ENCODE measurements at regions of chr20 and their contacts with region 1.

Region 1: DNA sequence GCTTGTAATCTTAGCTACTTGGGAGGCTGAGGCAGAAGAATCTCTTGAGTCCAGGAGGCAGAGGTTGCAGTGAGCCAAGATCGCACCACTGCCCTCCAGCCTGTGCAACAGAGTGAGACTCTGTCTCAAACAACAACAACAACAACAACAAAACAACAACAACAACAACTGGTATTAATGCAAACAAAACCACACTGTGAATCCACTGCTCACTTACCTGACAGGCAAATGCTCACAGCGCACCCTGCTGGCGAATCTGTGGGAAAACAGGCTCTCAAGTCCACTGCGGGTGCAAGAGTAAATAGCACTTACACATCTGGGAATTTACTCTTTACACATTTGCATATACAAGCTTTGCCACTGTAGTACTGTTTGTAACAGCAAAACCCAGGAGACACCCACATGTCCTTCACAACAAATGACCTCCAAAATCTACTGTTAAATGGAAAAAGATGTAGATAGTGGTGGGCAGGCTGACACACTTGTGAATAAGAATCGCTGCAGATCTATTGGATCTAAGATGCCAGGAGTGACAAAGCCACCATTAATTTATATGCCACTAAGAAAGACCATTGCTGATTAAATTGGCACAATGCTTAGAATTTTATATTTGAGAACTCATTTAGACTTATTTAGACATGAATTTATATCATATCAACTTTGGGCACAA is 29.3 kb downstream of the NSFL1C start:
- DNase-seq: peak; percentile 57
- ATAC-seq: peak; percentile 59
- H3K4me3 Mint-ChIP-seq: no peak overlapping the region
- H3K27ac Mint-ChIP-seq: no peak overlapping the region
- H3K4me1 Mint-ChIP-seq: peaks cover 34% of the 10 kb centered on the region
- H3K27me3 Mint-ChIP-seq: no peaks in the 10 kb centered on the region
- CTCF ChIP-seq: peak; percentile 81

Region 2: GRCh38 chr20:1212607-1213396 is 224.6 kb before region 1 on chr20:
- CTCF ChIA-PET with region 1: interaction called, 3 read pairs
- POLR2A ChIA-PET with region 1: no interaction called
- intact Hi-C with region 1: loop called (anchors 2 kb)
- DNase-seq: peak; percentile 22
- ATAC-seq: peak; percentile 91
- H3K4me3 Mint-ChIP-seq: no peak overlapping the region
- H3K27ac Mint-ChIP-seq: no peak overlapping the region
- H3K4me1 Mint-ChIP-seq: peaks cover 7% of the 10 kb centered on the region
- H3K27me3 Mint-ChIP-seq: peaks cover 46% of the 10 kb centered on the region
- CTCF ChIP-seq: peak; percentile 64

Region 3: DNA sequence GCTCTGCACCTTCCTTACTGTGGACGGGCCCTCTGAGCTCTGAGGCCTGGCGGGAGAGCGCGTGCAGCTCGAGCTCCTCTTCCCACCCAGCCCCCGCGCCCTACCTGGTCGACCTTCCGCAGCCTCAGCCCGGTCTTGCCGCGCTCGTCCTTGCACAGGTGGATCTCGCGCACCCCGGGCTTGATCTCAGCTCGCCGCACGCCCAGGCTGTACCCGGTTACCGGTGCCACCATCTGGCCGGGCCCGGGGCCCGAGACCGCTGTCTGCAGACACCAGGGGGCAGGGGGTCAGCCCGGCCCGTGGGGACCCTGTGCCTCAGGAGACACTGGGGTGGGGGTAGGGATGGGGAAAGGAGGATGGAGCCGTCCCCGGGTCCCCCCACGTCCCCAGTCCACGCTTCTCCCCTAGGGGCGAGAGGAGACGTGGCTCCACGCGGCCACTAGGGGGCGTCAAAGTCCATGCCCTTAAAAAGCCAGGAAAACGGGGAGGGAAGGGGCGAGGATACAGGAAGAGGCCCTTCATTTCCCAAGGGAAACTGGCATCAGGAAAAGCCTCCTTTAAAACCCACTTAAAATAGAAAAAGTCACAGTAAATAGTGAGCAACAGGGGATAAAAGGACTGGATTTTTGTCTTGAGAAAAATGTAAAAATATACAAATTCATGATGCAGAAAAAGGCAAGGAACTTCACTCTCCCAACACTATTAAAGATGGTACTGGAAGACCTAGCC is 124.0 kb before region 1 on chr20:
- CTCF ChIA-PET with region 1: interaction called, 59 read pairs
- POLR2A ChIA-PET with region 1: no interaction called
- intact Hi-C with region 1: loop called (anchors 1 kb)
- DNase-seq: peak; percentile 53
- ATAC-seq: peak; percentile 77
- H3K4me3 Mint-ChIP-seq: no peak overlapping the region
- H3K27ac Mint-ChIP-seq: no peak overlapping the region
- H3K4me1 Mint-ChIP-seq: peaks cover 2% of the 10 kb centered on the region
- H3K27me3 Mint-ChIP-seq: no peaks in the 10 kb centered on the region
- CTCF ChIP-seq: peak; percentile 90

Region 4: GRCh38 chr20:1325173-1326030 is 112.0 kb before region 1 on chr20:
- CTCF ChIA-PET with region 1: interaction called, 3 read pairs
- POLR2A ChIA-PET with region 1: interaction called, 3 read pairs
- intact Hi-C with region 1: loop called (anchors 2 kb)
- DNase-seq: peak; percentile 97
- ATAC-seq: peak; percentile 88
- H3K4me3 Mint-ChIP-seq: no peak overlapping the region
- H3K27ac Mint-ChIP-seq: no peak overlapping the region
- H3K4me1 Mint-ChIP-seq: peaks cover 38% of the 10 kb centered on the region
- H3K27me3 Mint-ChIP-seq: no peaks in the 10 kb centered on the region
- CTCF ChIP-seq: no peak

Region 5: DNA sequence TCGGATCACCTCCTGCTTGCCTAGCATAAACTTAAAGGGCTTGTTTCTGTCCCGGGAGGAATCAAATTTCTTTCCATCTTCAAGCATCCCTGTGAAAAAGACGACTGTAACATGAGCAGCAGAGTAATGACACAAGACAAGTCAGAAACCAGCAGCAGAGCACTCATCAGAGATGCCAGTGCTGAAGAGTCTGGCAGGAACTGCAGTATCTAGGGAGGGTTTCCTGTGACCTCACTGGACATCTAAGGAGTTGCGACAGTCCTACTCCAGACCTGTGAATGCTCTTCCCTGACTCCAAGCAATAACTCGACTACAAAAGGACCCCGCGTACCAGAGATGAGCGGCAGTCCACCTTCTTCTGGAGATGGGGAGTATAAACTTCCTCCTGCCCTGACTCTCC is 61.9 kb before region 1 on chr20:
- CTCF ChIA-PET with region 1: interaction called, 3 read pairs
- POLR2A ChIA-PET with region 1: interaction called, 3 read pairs
- intact Hi-C with region 1: loop called (anchors 5 kb)
- DNase-seq: no peak
- ATAC-seq: no peak
- H3K4me3 Mint-ChIP-seq: no peak overlapping the region
- H3K27ac Mint-ChIP-seq: peak overlapping the region; percentile 57
- H3K4me1 Mint-ChIP-seq: peaks cover 53% of the 10 kb centered on the region
- H3K27me3 Mint-ChIP-seq: no peaks in the 10 kb centered on the region
- CTCF ChIP-seq: no peak

Region 6: GRCh38 chr20:1448081-1448620 is 10.8 kb after region 1 on chr20:
- CTCF ChIA-PET with region 1: interaction called, 10 read pairs
- POLR2A ChIA-PET with region 1: no interaction called
- intact Hi-C with region 1: no loop called
- DNase-seq: no peak
- ATAC-seq: no peak
- H3K4me3 Mint-ChIP-seq: no peak overlapping the region
- H3K27ac Mint-ChIP-seq: no peak overlapping the region
- H3K4me1 Mint-ChIP-seq: no peaks in the 10 kb centered on the region
- H3K27me3 Mint-ChIP-seq: no peaks in the 10 kb centered on the region
- CTCF ChIP-seq: no peak

Region 7: DNA sequence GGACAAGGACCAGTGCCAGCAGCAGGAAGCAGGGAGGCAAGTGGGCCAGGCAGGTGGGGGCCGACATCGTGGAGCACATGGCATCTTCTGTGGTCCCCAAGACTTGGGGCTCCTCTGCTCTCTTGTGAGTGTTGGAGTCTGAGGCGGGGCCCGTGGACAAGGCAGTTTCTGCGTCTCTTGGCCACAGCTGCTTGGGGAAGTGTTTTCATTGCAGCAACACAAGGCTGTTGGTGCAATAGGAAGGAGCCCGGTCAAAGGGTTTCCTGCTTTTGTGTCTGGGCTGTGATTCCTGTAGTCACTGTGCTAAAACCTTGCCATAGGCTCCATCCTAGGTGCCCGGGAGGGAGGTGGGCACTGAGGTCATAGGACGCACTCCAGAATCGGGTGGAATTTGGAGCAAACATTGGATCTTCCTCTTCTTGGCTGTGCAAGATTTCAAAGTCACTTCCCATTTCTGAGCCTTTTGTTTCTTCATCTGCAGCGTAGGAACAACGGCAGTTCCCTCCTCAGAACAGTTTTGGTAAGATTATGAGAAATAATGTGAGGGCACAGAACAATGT is 54.0 kb after region 1 on chr20 and contains the start of gene SIRPB2:
- CTCF ChIA-PET with region 1: no interaction called
- POLR2A ChIA-PET with region 1: no interaction called
- intact Hi-C with region 1: no loop called
- DNase-seq: no peak
- ATAC-seq: no peak
- H3K4me3 Mint-ChIP-seq: no peak within 1 kb of the TSS
- H3K27ac Mint-ChIP-seq: peak within 1 kb of the TSS; percentile 8
- H3K4me1 Mint-ChIP-seq: peaks cover 38% of the 10 kb centered on the region
- H3K27me3 Mint-ChIP-seq: peaks cover 8% of the 10 kb centered on the region
- CTCF ChIP-seq: no peak
- total RNA-seq, gene SIRPB2: not detected in 2 replicates

Region 8: GRCh38 chr20:1503564-1504227 is 66.3 kb after region 1 on chr20:
- CTCF ChIA-PET with region 1: interaction called, 15 read pairs
- POLR2A ChIA-PET with region 1: no interaction called
- intact Hi-C with region 1: loop called (anchors 1 kb)
- DNase-seq: peak; percentile 45
- ATAC-seq: peak; percentile 100
- H3K4me3 Mint-ChIP-seq: no peak overlapping the region
- H3K27ac Mint-ChIP-seq: no peak overlapping the region
- H3K4me1 Mint-ChIP-seq: peaks cover 2% of the 10 kb centered on the region
- H3K27me3 Mint-ChIP-seq: peaks cover 23% of the 10 kb centered on the region
- CTCF ChIP-seq: peak; percentile 89